Posterior vena cava (tissue), 2 donors: ENCODE measurements at regions of chrX and their contacts with region 1.

Region 1: GRCh38 chrX:65595460-65595876 is 60.9 kb upstream of the LAS1L start:
- DNase-seq: peak; percentile 97

Region 2: GRCh38 chrX:65581661-65582339 is 13.7 kb before region 1 on chrX:
- intact Hi-C with region 1: no loop called
- DNase-seq: no peak

Region 3: GRCh38 chrX:65658229-65658628 is 62.8 kb after region 1 on chrX:
- intact Hi-C with region 1: no loop called
- DNase-seq: no peak

Region 4: DNA sequence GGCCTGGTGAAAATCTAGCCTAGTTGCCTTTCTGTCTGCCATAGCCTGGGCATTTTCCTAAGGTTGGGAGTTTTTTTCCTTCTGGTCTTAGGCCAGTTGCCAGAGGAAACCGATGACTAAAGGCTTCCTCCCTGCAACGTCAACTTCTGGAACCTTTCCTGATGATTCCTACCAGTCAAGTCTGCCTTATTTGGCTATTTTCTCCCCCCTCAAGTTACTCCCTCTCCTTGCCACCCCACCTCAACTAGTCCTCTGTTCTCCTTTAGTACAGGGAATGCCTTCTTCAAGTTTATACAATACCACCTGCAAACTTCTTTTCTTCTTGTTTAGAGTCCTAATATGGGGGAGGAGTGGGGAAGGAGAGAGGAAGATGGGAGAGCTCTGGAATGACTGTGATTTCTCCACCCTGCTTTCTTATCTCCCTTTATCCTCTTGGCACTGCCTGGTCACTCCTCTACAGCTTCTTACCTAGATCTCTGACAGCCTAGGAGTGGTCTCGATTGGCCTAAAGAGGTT is 82.5 kb after region 1 on chrX:
- intact Hi-C with region 1: loop called in 1 of 2 experiments (anchors 10 kb)
- DNase-seq: no peak

Region 5: GRCh38 chrX:65706041-65706828 is 110.8 kb after region 1 on chrX:
- intact Hi-C with region 1: loop called in 1 of 2 experiments (anchors 10 kb)
- DNase-seq: no peak